ENCODE measurements at regions of chr1 and their contacts with region 1.

Region 1: GRCh38 chr1:109027841-109028240 is 14.1 kb downstream of the WDR47 start:
- DNase-seq: no peak
- ATAC-seq: no peak
- H3K4me3 ChIP-seq: no peak overlapping the region
- H3K4me3 Mint-ChIP-seq: no peak overlapping the region
- H3K27ac ChIP-seq: no peak overlapping the region
- H3K27ac Mint-ChIP-seq: no peak overlapping the region
- H3K4me1 ChIP-seq: no peaks in the 10 kb centered on the region
- H3K4me1 Mint-ChIP-seq: peaks cover 2% of the 10 kb centered on the region
- H3K27me3 ChIP-seq: no peaks in the 10 kb centered on the region
- H3K27me3 Mint-ChIP-seq: no peaks in the 10 kb centered on the region
- CTCF ChIP-seq: peak; percentile 50

Region 2: DNA sequence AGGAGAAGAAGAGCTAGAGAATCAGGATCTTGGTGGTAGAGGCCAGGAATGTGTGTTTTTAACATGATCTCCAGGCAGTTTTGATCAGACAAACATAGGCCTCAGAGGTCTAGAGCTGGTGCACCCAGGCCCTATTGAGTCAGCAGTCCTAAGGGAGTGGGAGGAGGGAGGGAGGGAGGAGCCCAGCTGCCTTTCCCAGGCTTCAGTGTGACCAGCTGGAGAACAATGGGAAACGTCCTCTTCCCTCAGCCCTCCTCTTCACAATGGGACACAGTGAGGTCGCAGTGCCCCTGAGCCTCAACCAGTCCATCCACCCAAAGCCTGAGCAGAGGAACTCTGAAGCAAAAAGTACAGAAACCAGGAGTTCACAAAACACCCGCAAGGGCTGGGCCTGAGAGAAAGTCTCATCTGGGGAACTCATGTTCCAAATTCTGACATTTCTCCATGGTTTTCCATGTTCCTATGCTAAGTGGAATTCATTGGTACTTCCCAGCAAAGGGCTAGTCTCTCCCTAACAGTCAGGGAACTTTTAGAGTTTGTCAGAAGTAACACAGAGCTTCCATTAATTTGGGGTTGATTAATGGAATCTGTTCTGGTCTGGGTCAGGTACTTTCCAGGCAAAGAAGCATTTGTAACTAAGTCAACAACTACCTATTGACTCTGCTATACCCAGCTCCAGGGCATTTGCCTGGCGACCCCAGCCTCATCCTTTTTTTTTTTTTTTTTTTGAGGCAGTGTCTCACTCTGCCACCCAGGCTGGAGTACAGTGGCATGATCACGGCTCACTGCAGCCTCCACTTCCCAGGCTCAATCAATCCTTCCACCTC is 123.5 kb after region 1 on chr1:
- CTCF ChIA-PET with region 1: no interaction called
- POLR2A ChIA-PET with region 1: no interaction called
- intact Hi-C with region 1: no loop called
- DNase-seq: no peak
- ATAC-seq: no peak
- H3K4me3 ChIP-seq: no peak overlapping the region
- H3K4me3 Mint-ChIP-seq: no peak overlapping the region
- H3K27ac ChIP-seq: no peak overlapping the region
- H3K27ac Mint-ChIP-seq: no peak overlapping the region
- H3K4me1 ChIP-seq: peaks cover 0 to 7% of the 10 kb centered on the region in 2 donors
- H3K4me1 Mint-ChIP-seq: peaks cover 10% of the 10 kb centered on the region
- H3K27me3 ChIP-seq: no peaks in the 10 kb centered on the region
- H3K27me3 Mint-ChIP-seq: peaks cover 4% of the 10 kb centered on the region
- CTCF ChIP-seq: no peak

Region 3: GRCh38 chr1:109193653-109194590 is 166.1 kb after region 1 on chr1:
- CTCF ChIA-PET with region 1: interaction called, 5 read pairs
- POLR2A ChIA-PET with region 1: no interaction called
- intact Hi-C with region 1: loop called (anchors 10 kb)
- DNase-seq: peak; percentile 75
- ATAC-seq: peak; percentile 94
- H3K4me3 ChIP-seq: no peak overlapping the region
- H3K4me3 Mint-ChIP-seq: no peak overlapping the region
- H3K27ac ChIP-seq: no peak overlapping the region
- H3K27ac Mint-ChIP-seq: peak overlapping the region; percentile 10
- H3K4me1 ChIP-seq: peaks cover 9 to 10% of the 10 kb centered on the region in 2 donors
- H3K4me1 Mint-ChIP-seq: peaks cover 10% of the 10 kb centered on the region
- H3K27me3 ChIP-seq: no peaks in the 10 kb centered on the region
- H3K27me3 Mint-ChIP-seq: peaks cover 6% of the 10 kb centered on the region
- CTCF ChIP-seq: peak; percentile 80

Measured in B cell (primary cell).